Ascending aorta (tissue), 2 donors: ENCODE measurements at regions of chr9 and their contacts with region 1.

Region 1: DNA sequence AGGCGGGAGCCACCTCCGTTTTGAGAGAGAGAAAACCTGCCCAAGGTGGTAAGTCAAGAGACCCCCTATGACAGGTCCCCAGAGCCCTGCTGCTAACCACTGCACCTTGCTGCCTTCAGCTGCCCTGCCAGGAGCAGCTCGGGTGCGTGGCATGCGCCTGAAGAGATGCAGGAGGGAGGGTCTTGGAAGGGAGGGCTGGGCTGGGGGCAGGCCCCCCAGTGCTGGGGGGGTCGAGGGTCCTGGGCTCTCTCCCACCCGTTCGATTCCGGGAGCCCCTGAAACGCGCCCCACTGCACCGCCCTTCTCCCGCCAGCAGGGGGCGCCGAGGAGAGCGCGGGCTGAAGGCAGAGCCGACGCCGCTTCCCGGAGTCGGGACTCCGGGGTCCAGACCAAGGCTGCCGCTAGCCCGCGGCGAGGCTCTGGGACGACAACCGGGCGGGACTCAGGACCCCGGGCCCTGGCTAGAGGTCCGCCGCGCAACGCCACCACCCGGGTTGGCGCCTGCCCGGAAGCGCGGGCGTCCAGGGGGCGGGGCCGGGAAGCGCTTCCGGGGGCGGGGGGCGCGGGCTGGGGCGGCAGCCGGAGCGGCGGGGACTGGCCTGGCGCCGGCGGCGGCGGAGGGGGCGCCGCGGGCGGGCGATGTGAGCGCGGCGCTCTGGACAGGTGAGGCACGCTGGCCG is at the start of gene ZBTB34:
- DNase-seq: peak in 1 of 2 donors; percentile 82
- H3K4me3 ChIP-seq: peak within 1 kb of the TSS; percentile 97 to 99
- H3K27ac ChIP-seq: peak within 1 kb of the TSS; percentile 90 to 97
- H3K4me1 ChIP-seq: peaks cover 3 to 11% of the 10 kb centered on the region in 2 donors
- H3K27me3 ChIP-seq: no peaks in the 10 kb centered on the region
- CTCF ChIP-seq: peak; percentile 99 to 100 (median 100)
- total RNA-seq, gene ZBTB34: 8.9 TPM

Region 2: GRCh38 chr9:126690431-126691350 is 169.5 kb before region 1 on chr9:
- intact Hi-C with region 1: no loop called
- DNase-seq: no peak
- H3K4me3 ChIP-seq: no peak overlapping the region
- H3K27ac ChIP-seq: no peak overlapping the region
- H3K4me1 ChIP-seq: no peaks in the 10 kb centered on the region
- H3K27me3 ChIP-seq: no peaks in the 10 kb centered on the region
- CTCF ChIP-seq: no peak

Region 3: GRCh38 chr9:126804696-126805545 is 55.3 kb before region 1 on chr9 and contains the start of gene ZBTB43:
- intact Hi-C with region 1: loop called (anchors 2 kb)
- DNase-seq: peak; percentile 88 to 98
- H3K4me3 ChIP-seq: peak within 1 kb of the TSS; percentile 89 to 97
- H3K27ac ChIP-seq: peak within 1 kb of the TSS; percentile 76 to 80
- H3K4me1 ChIP-seq: peaks cover 10 to 13% of the 10 kb centered on the region in 2 donors
- H3K27me3 ChIP-seq: no peaks in the 10 kb centered on the region
- CTCF ChIP-seq: no peak
- total RNA-seq, gene ZBTB43: 2.4 TPM

Region 4: GRCh38 chr9:126914458-126915280 is 54.5 kb after region 1 on chr9 and contains the start of gene RALGPS1:
- intact Hi-C with region 1: loop called (anchors 2 kb)
- DNase-seq: peak; percentile 59 to 97
- H3K4me3 ChIP-seq: peak within 1 kb of the TSS; percentile 74 to 77
- H3K27ac ChIP-seq: peak within 1 kb of the TSS in 1 of 2 donors; percentile 79
- H3K4me1 ChIP-seq: peaks cover 0 to 5% of the 10 kb centered on the region in 2 donors
- H3K27me3 ChIP-seq: no peaks in the 10 kb centered on the region
- CTCF ChIP-seq: no peak
- total RNA-seq, gene RALGPS1: 9.8 TPM